ENCODE measurements at regions of chr4 and their contacts with region 1.

Region 1: GRCh38 chr4:139301113-139301820 is at the start of gene NAA15:
- DNase-seq: peak; percentile 99
- ATAC-seq: peak; percentile 98
- total RNA-seq, gene NAA15: 33.1 to 46.1 TPM

Region 2: GRCh38 chr4:139083956-139084803 is 217.1 kb before region 1 on chr4:
- intact Hi-C with region 1: loop called in 1 of 2 experiments (anchors 5 kb)
- DNase-seq: peak; percentile 92
- ATAC-seq: peak; percentile 79 to 82

Region 3: DNA sequence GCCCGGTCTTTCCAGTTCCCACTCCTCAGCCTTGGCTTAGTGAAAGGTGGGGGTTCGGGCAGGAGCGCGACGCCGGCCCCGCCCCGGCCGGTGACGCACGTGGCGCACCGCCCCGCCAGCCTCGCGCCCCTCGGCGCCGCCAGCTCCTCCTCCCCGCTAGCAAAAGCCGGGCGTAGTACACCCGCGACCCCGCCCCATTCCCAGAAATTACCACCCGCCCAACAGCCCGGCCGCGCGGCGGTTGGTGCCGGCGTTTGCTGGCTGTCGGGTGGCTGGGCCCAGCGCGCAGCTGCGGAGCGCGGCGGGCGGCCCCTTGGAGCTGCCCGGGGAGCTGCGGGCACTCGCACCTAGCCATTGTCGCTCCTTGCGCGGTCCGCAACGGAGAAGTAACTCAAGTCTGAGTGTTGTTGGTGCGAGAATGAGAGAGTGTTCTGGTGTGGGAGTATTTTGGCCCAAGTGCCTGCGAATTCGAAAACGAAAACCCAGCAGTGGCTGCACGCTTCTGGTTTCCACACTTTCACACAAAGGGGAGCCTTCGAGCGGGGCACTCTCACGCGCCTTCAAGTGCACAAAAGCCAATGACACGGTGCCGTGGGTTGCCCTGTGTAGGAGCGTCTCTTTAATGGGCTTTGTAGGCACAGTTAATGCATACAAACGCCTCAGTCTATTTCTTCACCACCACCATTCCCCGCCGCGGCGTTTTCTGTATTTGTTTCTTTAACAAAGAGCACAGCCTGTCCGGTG is 123.2 kb before region 1 on chr4:
- intact Hi-C with region 1: loop called in 1 of 2 experiments (anchors 5 kb)
- DNase-seq: peak; percentile 97
- ATAC-seq: peak; percentile 89 to 90

Region 4: GRCh38 chr4:139849219-139849618 is 548.0 kb after region 1 on chr4:
- intact Hi-C with region 1: no loop called
- DNase-seq: no peak
- ATAC-seq: no peak